Right ventricle myocardium superior (tissue), 1 donor: ENCODE measurements at regions of chr6 and their contacts with region 1.

Region 1: DNA sequence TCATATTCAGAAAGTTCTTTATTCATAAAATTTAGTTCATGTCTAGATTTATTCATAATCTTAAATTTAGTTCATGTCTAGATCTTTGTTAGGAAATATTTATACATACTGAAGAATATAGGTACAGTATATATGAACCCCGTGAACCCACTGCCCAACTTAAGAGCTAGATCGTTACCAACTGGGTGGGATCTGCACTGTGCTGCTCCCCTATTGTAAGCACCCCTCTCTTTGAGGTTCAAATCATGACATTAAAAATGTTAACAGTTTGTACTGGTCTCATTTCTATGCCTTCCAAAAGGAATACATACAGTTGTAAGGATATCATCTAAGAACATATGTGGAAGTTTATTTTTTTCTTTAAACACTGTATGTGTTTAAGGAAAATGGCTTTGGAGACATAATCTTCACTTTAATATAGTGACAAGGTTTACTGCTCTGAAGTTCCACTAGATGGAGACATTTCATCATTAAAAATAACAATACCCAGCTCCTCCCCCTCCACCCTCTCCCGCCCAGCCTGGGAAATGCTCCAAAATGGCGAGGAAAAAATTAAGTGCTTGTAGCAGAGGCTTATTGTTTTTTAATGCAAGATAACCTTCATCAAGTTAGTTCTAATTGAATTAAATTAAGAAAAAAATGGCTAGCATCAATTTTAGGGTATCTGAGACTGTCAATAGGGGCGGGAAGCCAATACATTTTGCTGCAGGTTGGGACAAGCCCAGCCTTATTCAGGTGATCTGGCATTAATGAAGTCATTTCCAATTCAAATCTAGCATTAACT is 104.1 kb upstream of the TRAF3IP2 start:
- DNase-seq: no peak
- ATAC-seq: peak; percentile 81

Region 2: GRCh38 chr6:111873178-111874024 is 163.6 kb after region 1 on chr6 and contains the start of gene FYN:
- intact Hi-C with region 1: loop called (anchors 2 kb)
- DNase-seq: peak; percentile 99
- ATAC-seq: peak; percentile 99
- total RNA-seq, gene FYN: 40.6 TPM

Region 3: DNA sequence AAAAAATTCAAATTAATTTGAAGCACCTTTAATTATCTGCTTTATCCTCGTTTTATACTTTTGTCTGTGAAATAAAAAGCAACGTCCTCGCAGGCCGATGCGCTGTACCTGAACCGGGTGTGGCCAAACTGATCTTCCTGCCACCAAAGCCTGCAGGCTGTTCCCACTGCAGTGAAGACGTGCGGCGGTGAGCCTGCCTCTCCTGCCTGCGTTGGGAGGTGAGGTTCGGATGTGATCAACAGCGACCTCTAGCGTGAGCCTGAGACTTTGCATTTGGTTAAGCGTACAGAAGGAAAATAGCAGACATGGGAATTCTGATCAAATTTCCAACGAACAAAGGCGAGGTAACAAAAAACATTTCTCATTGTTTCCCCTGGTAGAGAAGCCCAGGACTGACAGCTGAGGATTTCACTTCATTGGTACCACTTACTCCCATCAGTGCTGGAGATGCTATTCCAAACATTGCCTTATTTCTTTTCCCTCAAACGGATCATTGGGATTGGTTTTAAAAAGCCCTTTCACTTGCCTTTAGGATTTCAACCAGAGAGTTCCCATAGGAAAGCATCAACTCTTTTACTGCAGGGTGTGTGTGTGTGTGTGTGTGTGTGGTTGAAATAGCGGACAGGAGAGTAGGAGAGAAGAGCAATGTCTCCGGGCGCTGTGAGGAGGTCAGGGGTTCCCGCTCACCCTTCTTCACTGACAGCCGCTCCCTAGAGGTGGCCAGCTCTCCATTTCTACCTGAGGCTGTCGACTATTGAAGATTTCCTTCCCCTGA is 287.5 kb after region 1 on chr6:
- intact Hi-C with region 1: loop called (anchors 2 kb)
- DNase-seq: peak; percentile 84
- ATAC-seq: peak; percentile 96

Region 4: DNA sequence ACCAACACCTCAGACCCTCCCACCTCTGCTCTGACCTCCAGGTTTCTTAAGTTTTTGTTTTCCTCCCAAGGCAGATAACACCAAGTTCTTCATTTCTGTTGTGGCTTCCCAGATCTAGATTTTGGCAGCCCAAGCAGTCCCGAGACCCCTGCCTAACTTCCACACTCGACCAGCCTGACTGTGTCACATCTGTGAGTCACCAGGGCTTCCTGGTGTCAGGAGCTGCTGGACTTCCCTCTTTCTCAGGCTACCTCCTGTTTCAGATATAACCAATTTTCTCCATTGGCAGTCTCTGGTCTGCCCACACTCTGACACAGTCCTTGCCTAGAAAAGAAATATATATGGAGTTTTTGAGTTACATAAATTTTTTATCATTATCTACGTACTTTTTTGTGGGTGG is 298.0 kb after region 1 on chr6:
- intact Hi-C with region 1: no loop called
- DNase-seq: no peak
- ATAC-seq: peak; percentile 38

Region 5: GRCh38 chr6:112043032-112044007 is 333.5 kb after region 1 on chr6:
- intact Hi-C with region 1: loop called (anchors 2 kb)
- DNase-seq: peak; percentile 93
- ATAC-seq: peak; percentile 96